ENCODE measurements at regions of chr2 and their contacts with region 1.

Region 1: DNA sequence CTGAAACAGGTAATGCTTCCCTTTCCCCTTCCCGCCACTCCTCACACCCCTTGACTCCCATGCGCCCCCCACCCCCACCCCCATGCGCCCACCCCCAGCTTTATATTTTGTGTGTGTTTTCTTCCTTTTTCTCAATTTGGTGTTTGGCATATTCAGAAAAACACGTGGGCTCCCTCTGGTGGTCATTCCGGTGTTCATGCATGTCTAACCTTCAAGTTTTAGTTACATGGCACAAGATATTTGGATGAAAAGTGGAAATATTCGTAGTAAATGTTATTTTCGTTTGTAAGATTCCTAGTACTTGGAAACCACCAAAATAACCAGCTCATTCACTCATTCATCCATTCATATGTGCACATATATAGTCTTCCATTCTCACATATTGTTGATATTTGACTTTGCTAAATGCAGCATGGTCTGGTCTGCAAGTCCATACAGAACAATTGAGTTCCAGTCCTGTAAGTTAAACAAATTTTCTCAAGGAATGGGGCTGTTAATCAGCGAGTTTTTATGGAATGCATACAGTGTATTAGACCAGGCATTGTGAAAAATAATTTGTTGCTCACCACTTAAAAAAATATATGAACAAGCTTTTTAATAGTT is 143.6 kb upstream of the MAP3K20 start:
- DNase-seq: peak; percentile 50
- H3K4me3 ChIP-seq: no peak overlapping the region
- H3K27ac ChIP-seq: peak overlapping the region in 1 of 2 experiments; percentile 95; a peak in 2 of 4 replicates
- H3K4me1 ChIP-seq: peaks cover 0 to 32% of the 10 kb centered on the region in 2 experiments; a peak in 2 of 4 replicates
- H3K27me3 ChIP-seq: no peaks in the 10 kb centered on the region
- CTCF ChIP-seq: peak; percentile 78
- EP300 ChIP-seq: no peak
- RAD21 ChIP-seq: peak; percentile 87

Region 2: GRCh38 chr2:172821370-172822347 is 110.4 kb before region 1 on chr2:
- CTCF ChIA-PET with region 1: interaction called, 26 read pairs
- POLR2A ChIA-PET with region 1: no interaction called
- DNase-seq: peak; percentile 65
- H3K4me3 ChIP-seq: no peak overlapping the region
- H3K27ac ChIP-seq: peak overlapping the region in 1 of 2 experiments; percentile 95; a peak in 2 of 4 replicates
- H3K4me1 ChIP-seq: peaks cover 10 to 24% of the 10 kb centered on the region in 2 experiments; a peak in 3 of 4 replicates
- H3K27me3 ChIP-seq: no peaks in the 10 kb centered on the region
- CTCF ChIP-seq: no peak
- EP300 ChIP-seq: peak in 1 of 2 experiments; percentile 75; a peak in 2 of 4 replicates
- RAD21 ChIP-seq: no peak

Region 3: DNA sequence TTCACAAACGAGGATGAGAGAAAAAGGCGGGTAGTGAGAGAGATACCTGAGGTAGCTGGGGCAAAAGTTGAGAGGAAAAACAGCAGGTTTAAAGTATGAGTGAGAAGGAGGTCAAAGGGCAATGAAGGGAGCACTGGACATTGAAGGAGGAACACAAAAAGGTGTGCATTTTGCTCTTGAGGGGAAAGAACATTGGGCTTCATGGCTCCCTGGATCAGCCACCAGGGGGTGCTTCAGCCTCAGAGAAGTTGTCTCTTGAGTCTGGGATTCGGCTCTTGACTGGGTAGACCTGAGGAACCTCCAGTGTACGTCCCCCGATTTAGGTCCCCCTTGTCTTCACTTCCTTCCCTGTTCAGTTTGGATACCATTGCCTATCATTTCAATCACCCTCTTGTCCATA is 67.8 kb before region 1 on chr2:
- CTCF ChIA-PET with region 1: interaction called, 98 read pairs
- POLR2A ChIA-PET with region 1: interaction called, 4 read pairs
- DNase-seq: no peak
- H3K4me3 ChIP-seq: no peak overlapping the region; a peak in 1 of 4 replicates
- H3K27ac ChIP-seq: no peak overlapping the region
- H3K4me1 ChIP-seq: peaks cover 5 to 18% of the 10 kb centered on the region in 2 experiments; a peak in 2 of 4 replicates
- H3K27me3 ChIP-seq: no peaks in the 10 kb centered on the region
- CTCF ChIP-seq: peak; percentile 61
- EP300 ChIP-seq: no peak
- RAD21 ChIP-seq: peak; percentile 79

Region 4: DNA sequence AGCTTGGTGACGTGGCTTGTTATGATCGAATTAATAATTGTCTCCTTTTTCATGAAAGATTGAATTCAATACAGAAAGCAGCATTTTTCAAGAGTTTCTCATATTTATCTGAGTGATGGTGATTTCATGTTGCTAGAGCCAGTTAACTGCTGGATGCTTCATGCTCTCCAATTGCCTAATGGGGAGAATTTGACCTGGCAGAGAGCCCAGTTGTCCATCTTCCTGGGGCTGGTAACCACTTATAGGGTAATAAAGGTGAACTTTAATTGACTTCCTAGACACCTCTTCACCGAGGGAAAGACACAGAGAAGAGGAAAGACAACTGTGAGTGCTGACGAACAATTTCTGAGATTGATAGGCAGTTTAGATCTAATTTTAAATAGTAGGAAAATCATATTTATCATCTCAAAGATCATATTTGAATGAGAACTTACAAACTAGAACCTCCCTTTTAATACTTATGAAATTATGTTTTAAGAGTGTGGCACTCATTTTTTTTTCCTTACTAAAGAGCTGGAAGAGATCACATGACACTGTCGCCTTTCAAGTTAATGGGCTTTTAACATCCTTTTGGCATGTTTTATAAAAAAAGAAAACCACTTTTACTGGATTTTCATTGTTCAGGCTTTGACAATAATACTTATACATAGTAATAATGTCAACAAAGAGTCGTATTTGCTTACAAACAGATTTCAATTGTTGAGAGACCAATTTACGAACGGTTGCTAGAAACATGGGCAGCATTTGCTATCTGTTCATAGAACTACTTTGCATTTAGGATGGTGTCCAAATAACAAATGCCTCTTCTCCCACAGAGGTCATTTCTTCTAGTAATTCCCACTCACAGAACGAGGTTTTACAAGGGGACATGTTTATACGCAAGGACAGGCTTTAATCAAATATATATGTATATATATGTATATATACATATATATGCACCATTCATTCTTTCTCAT is 43.0 kb before region 1 on chr2:
- CTCF ChIA-PET with region 1: interaction called, 55 read pairs
- POLR2A ChIA-PET with region 1: no interaction called
- DNase-seq: peak; percentile 32
- H3K4me3 ChIP-seq: no peak overlapping the region
- H3K27ac ChIP-seq: peak overlapping the region in 1 of 2 experiments; percentile 94; a peak in 2 of 4 replicates
- H3K4me1 ChIP-seq: peaks cover 0 to 52% of the 10 kb centered on the region in 2 experiments; a peak in 2 of 4 replicates
- H3K27me3 ChIP-seq: peaks cover 7% of the 10 kb centered on the region
- CTCF ChIP-seq: no peak
- EP300 ChIP-seq: no peak
- RAD21 ChIP-seq: no peak

Region 5: DNA sequence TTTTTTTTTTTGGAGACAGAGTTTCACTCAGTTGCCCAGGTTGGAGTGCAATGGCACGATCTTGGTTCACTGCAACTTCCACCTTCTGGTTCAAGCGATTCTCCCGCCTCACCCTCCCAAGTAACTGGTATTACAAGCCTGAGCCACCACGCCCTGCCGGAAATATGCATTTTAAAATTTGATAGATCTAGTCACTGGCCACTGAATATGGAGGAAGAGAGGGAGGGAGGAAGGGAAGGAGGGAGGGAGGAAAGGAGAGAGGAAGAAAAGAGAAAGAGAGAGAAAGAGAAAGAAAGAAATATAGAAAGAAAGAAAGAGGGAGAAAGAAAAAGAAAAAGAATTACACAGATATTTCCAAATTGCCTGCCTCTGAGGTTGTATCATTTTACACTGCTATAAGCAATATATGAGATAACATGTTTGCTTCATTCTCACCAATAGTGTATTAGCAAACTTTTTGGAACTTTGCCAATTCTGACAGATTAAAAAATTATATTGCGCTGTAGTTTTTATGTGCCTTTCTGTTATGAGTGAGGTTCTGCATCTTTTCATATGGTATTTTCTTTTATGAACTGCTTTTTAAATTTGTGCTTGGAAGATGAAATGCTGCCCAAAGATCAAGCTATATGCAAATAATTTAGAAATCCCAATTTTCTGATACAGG is 17.5 kb before region 1 on chr2:
- CTCF ChIA-PET with region 1: interaction called, 69 read pairs
- POLR2A ChIA-PET with region 1: no interaction called
- DNase-seq: no peak
- H3K4me3 ChIP-seq: no peak overlapping the region
- H3K27ac ChIP-seq: no peak overlapping the region
- H3K4me1 ChIP-seq: peaks cover 0 to 3% of the 10 kb centered on the region in 2 experiments; a peak in 1 of 4 replicates
- H3K27me3 ChIP-seq: no peaks in the 10 kb centered on the region
- CTCF ChIP-seq: no peak
- EP300 ChIP-seq: no peak
- RAD21 ChIP-seq: no peak

Region 6: DNA sequence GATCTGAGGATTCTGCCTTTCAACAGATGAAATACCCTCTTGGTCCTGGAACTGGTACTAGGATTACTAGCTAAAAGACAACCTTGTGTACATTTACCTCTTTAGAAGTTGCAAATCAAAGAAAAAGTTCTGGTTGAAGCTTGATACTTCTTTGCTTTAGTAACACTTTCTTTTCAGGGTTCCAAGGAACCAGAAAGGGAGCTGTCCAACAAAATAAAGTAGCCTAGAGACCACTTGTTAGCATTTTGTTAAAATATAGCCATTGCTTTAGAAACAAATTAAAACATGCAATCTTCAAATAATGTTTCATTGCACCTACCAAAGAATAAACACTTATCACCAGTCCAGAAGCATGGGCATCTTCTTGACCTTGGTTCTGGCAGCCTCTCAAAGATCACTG is 25.7 kb after region 1 on chr2:
- CTCF ChIA-PET with region 1: interaction called, 10 read pairs
- POLR2A ChIA-PET with region 1: no interaction called
- DNase-seq: no peak
- H3K4me3 ChIP-seq: no peak overlapping the region
- H3K27ac ChIP-seq: no peak overlapping the region
- H3K4me1 ChIP-seq: no peaks in the 10 kb centered on the region
- H3K27me3 ChIP-seq: no peaks in the 10 kb centered on the region
- CTCF ChIP-seq: no peak
- EP300 ChIP-seq: no peak
- RAD21 ChIP-seq: no peak

Measured in SK-N-SH (cell line).